Posterior vena cava (tissue), 2 donors: ENCODE measurements at regions of chr2 and their contacts with region 1.

Region 1: GRCh38 chr2:10369269-10370255 is 66.9 kb downstream of the HPCAL1 start:
- DNase-seq: no peak

Region 2: DNA sequence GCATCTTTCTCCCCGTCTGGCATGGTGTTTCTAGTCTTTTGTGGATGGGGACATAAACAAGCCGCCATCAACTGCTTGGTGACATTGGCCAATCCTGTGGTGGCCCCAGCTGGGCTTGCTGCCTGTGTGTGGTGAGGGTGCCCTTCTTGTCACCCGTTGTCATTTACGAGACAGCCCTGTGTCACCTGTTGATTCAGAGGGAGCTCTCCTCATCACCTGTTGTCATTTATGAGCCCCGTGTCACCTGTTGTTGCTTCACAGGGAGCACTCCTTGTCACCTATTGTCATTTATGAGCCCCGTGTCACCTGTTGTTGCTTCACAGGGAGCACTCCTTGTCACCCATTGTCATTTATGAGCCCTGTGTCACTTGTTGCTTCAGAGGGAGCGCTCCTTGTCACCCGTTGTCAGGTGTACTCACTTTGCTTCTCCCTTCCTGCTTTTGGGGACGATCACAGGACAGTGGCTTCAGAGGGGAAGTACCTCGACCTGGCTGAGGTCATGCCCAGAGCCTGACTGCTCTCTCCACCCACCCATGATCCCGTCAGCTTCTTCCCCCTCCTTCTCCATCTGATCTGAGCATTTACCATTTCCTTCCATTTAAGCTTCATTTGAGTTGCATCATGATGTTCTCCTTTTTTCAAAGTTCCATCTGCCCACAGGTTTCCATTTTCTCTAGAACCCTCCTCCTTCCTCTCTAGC is 37.7 kb before region 1 on chr2:
- intact Hi-C with region 1: loop called in 1 of 2 experiments (anchors 1 kb)
- DNase-seq: peak; percentile 66

Region 3: DNA sequence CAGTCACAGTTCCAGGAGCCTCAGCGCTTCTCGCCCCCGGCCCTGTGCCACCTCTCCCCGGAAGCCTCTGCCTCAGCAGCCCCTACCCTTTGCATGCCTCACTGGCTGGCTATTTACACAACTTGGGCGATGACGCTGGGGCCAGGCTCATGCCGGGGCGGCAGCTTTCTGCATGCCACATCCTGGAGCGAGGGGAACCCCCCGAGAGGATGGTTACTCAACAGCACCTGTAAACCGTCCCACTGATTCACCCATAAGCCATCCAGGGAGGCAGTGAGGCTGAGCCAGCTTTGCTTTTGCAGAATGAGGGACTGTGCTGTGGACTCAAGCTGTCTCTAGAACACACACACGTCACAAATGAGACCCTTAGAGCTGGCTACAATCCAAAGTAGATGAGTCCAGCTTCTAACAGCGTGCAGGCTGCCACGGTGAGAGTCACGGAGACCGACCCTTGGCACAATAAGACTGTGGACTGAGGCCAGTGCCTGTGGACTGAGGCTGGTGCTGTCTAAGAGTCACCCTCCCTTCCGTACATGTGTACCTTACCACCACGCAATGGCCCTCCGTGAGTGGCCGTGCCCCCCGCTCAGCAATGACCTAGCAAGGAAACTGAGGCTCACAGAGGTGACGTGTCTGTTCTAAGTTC is 124.2 kb after region 1 on chr2:
- intact Hi-C with region 1: no loop called
- DNase-seq: peak; percentile 70